ENCODE measurements at regions of chr7 and their contacts with region 1.

Region 1: GRCh38 chr7:8594115-8594514 is 160.7 kb downstream of the NXPH1 start:
- DNase-seq: peak in 1 of 2 experiments; percentile 65
- H3K4me3 ChIP-seq: no peak overlapping the region
- H3K4me3 Mint-ChIP-seq: peak overlapping the region; percentile 64
- H3K27ac Mint-ChIP-seq: peak overlapping the region; percentile 95
- H3K4me1 ChIP-seq: peaks cover 58% of the 10 kb centered on the region
- H3K4me1 Mint-ChIP-seq: peaks cover 46% of the 10 kb centered on the region
- H3K27me3 ChIP-seq: no peaks in the 10 kb centered on the region
- H3K27me3 Mint-ChIP-seq: no peaks in the 10 kb centered on the region
- CTCF ChIP-seq: no peak

Region 2: DNA sequence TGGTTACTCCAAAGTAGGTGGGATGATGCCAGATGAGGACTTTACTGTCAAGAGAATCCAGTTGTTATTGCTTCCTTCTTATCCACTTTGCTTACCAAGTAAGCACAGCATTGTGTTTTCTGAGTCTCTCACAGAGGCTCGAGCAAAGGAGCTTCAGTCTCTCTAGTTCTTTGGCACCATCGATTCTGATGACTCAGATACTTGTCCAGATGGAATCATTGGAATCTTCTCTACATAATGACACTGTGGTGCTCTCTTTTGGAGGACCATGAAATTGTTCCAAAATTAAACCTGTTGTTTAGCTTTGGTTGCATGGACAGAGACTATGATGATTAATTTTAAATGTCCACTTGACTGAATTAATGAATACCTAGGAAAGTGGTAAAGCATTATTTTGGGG is 28.1 kb before region 1 on chr7:
- CTCF ChIA-PET with region 1: no interaction called
- POLR2A ChIA-PET with region 1: no interaction called
- intact Hi-C with region 1: loop called (anchors 1 kb)
- DNase-seq: no peak
- H3K4me3 ChIP-seq: no peak overlapping the region
- H3K4me3 Mint-ChIP-seq: no peak overlapping the region
- H3K27ac Mint-ChIP-seq: no peak overlapping the region
- H3K4me1 ChIP-seq: peaks cover 9% of the 10 kb centered on the region; the same call in 1 of the 2 replicates
- H3K4me1 Mint-ChIP-seq: peaks cover 9% of the 10 kb centered on the region
- H3K27me3 ChIP-seq: no peaks in the 10 kb centered on the region
- H3K27me3 Mint-ChIP-seq: no peaks in the 10 kb centered on the region
- CTCF ChIP-seq: no peak

Region 3: GRCh38 chr7:8607708-8608107 is 13.6 kb after region 1 on chr7:
- CTCF ChIA-PET with region 1: no interaction called
- POLR2A ChIA-PET with region 1: no interaction called
- intact Hi-C with region 1: no loop called
- DNase-seq: no peak
- H3K4me3 ChIP-seq: no peak overlapping the region
- H3K4me3 Mint-ChIP-seq: no peak overlapping the region
- H3K27ac Mint-ChIP-seq: no peak overlapping the region
- H3K4me1 ChIP-seq: no peaks in the 10 kb centered on the region
- H3K4me1 Mint-ChIP-seq: no peaks in the 10 kb centered on the region
- H3K27me3 ChIP-seq: no peaks in the 10 kb centered on the region
- H3K27me3 Mint-ChIP-seq: peaks cover 3% of the 10 kb centered on the region
- CTCF ChIP-seq: no peak

Region 4: DNA sequence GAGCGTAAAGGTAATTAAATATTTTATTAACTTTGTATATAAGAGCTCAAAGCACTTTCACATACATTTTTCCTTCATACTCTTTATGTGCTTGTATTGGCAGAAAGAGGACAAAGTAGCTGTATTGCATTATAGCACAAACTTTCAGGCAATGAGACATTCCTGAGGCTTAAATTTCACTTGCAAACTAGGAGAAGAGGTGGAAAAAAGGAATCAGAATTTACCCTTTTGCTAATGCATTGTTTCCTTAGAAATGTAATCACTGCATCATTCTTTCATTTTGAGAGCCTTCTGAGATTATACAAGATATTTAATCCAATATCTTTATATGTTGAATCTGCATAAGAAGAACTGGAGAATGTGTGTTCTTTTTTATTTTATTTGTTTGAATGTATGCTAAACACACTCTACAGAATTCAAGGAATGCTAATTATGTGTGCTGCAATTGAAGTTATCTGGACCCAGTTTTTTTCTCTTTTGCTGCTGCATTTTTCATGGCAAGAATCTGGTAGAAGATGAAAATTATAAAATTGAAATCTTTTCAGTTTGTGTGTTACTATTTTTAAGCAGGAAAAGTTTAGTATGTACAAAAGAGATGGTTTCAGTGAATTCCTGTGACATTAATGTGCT is 24.4 kb after region 1 on chr7:
- CTCF ChIA-PET with region 1: no interaction called
- POLR2A ChIA-PET with region 1: no interaction called
- intact Hi-C with region 1: loop called (anchors 1 kb)
- DNase-seq: no peak
- H3K4me3 ChIP-seq: no peak overlapping the region
- H3K4me3 Mint-ChIP-seq: no peak overlapping the region
- H3K27ac Mint-ChIP-seq: peak overlapping the region; percentile 49
- H3K4me1 ChIP-seq: peaks cover 20% of the 10 kb centered on the region
- H3K4me1 Mint-ChIP-seq: no peaks in the 10 kb centered on the region
- H3K27me3 ChIP-seq: no peaks in the 10 kb centered on the region
- H3K27me3 Mint-ChIP-seq: no peaks in the 10 kb centered on the region
- CTCF ChIP-seq: no peak

Region 5: GRCh38 chr7:8625612-8626011 is 31.5 kb after region 1 on chr7:
- CTCF ChIA-PET with region 1: no interaction called
- POLR2A ChIA-PET with region 1: interaction called, 3 read pairs
- intact Hi-C with region 1: loop called (anchors 1 kb)
- DNase-seq: no peak
- H3K4me3 ChIP-seq: no peak overlapping the region
- H3K4me3 Mint-ChIP-seq: no peak overlapping the region
- H3K27ac Mint-ChIP-seq: no peak overlapping the region
- H3K4me1 ChIP-seq: peaks cover 15% of the 10 kb centered on the region
- H3K4me1 Mint-ChIP-seq: peaks cover 11% of the 10 kb centered on the region
- H3K27me3 ChIP-seq: no peaks in the 10 kb centered on the region
- H3K27me3 Mint-ChIP-seq: no peaks in the 10 kb centered on the region
- CTCF ChIP-seq: no peak

Region 6: GRCh38 chr7:8668627-8669500 is 74.7 kb after region 1 on chr7:
- CTCF ChIA-PET with region 1: no interaction called
- POLR2A ChIA-PET with region 1: no interaction called
- intact Hi-C with region 1: loop called (anchors 2 kb)
- DNase-seq: no peak
- H3K4me3 ChIP-seq: no peak overlapping the region
- H3K4me3 Mint-ChIP-seq: no peak overlapping the region
- H3K27ac Mint-ChIP-seq: no peak overlapping the region
- H3K4me1 ChIP-seq: 0 out of 2 replicates have a peak, but pooled peaks cover 3% of the 10 kb centered on the region
- H3K4me1 Mint-ChIP-seq: peaks cover 13% of the 10 kb centered on the region
- H3K27me3 ChIP-seq: no peaks in the 10 kb centered on the region; the same call in 1 of the 2 replicates
- H3K27me3 Mint-ChIP-seq: no peaks in the 10 kb centered on the region
- CTCF ChIP-seq: no peak

Region 7: DNA sequence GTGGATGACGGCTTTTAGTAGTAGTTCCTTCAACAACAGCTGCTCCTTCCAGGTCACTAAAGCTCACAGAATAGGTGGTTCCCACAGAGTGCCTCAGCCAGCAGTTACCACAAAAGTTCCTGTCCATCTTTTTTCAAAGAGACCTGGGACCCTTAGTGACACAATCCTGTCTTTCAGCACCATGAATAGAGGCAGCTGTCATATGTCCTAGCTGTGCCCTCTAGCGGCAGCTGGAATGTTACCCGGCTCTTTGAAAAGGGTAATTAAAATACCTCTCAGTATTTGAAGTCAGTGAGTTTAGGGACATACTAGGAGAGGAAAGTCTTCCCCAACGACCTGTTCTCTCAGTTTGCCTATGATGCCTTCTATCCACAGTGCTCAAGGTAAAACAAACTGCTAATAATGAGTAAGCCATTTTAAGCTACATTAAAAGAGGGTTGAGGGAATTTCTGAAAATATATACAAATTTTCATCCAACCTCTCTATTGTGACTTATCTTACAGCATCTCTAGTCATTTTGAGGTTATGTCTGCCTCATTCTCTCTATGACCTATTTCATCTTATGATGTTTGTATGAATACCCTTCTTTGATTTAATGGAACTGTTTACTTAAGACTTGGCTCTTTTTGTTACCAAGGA is 130.1 kb after region 1 on chr7:
- CTCF ChIA-PET with region 1: interaction called, 4 read pairs
- POLR2A ChIA-PET with region 1: no interaction called
- intact Hi-C with region 1: loop called (anchors 1 kb)
- DNase-seq: peak; percentile 72 to 76
- H3K4me3 ChIP-seq: no peak overlapping the region
- H3K4me3 Mint-ChIP-seq: no peak overlapping the region
- H3K27ac Mint-ChIP-seq: no peak overlapping the region
- H3K4me1 ChIP-seq: no peaks in the 10 kb centered on the region
- H3K4me1 Mint-ChIP-seq: peaks cover 8% of the 10 kb centered on the region
- H3K27me3 ChIP-seq: no peaks in the 10 kb centered on the region
- H3K27me3 Mint-ChIP-seq: no peaks in the 10 kb centered on the region
- CTCF ChIP-seq: peak; percentile 83 to 90

Measured in Caco-2 (cell line).